Ovary (tissue), 10 donors: ENCODE measurements at regions of chr22 and their contacts with region 1.

Region 1: DNA sequence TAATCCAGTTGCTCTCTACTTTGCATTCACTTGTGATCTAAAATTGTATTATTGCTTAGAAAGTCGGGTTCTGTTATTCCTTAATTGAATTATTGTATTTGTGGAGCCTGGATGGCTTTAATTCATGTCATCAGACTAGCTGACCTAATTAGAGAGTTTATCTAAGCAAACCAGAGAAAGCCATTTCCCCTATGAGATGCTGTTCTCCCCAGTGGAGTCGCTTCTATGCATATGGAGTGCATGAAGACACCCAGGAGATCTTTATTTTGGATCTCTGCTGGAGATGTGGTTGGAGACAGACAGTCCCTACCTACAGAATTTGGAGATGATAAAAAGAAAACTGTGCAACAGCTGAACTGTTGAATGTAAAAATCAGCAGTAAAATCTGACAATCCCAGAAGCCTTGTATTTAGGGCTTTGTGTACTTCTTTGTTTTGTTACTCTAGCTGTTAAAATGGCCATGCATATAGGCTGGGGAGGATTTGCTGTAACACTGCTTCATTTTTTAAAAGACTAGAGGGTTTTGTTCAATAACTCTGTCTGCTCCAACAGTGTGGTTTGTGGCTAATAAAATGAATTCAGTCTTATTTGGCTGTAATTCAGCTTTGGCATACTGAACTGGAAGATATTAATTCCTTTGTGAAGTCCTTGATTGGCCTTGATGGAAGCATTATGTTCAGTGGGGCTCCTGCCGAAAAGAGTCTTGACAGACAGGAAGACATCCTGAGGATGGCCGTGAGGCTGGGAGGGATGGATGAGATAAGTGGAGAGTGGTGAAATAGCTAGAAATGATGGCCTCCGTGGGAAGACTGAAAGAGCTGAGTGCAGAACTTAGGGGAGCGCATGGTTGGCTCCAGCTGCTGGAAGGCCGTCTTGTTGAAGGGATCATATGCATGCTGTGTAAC is 45.0 kb upstream of the MYO18B start:
- DNase-seq: no peak
- H3K4me3 ChIP-seq: no peak overlapping the region
- H3K27ac ChIP-seq: no peak overlapping the region
- H3K4me1 ChIP-seq: no peaks in the 10 kb centered on the region
- H3K27me3 ChIP-seq: no peaks in the 10 kb centered on the region
- CTCF ChIP-seq: no peak
- EP300 ChIP-seq: no peak
- POLR2A ChIP-seq: no peak

Region 2: GRCh38 chr22:25554238-25554671 is 142.8 kb before region 1 on chr22:
- intact Hi-C with region 1: loop called in 1 of 4 experiments (anchors 10 kb)
- DNase-seq: no peak
- H3K4me3 ChIP-seq: no peak overlapping the region
- H3K27ac ChIP-seq: no peak overlapping the region
- H3K4me1 ChIP-seq: no peaks in the 10 kb centered on the region
- H3K27me3 ChIP-seq: no peaks in the 10 kb centered on the region
- CTCF ChIP-seq: no peak
- EP300 ChIP-seq: no peak
- POLR2A ChIP-seq: no peak

Region 3: DNA sequence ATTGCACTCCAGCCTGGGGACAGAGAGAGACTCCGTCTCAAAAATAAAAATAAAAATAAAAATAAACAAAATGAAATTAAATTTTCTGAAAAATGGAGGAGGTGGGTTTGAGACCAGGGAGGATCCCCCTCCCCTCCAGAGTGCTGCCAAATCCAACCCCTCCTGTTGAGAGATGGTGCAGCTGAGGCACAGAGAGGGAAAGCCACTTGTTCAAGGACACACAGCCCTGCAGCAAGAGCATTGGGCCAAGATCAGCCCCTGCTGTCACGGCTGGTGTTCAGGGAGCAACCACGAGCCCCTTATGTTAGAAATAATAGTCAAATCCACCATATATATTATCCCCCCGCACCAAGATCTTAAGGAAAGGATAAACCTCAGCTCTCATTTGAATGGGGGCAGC is 47.7 kb after region 1 on chr22:
- intact Hi-C with region 1: loop called in 1 of 4 experiments (anchors 1 kb)
- DNase-seq: no peak
- H3K4me3 ChIP-seq: no peak overlapping the region
- H3K27ac ChIP-seq: no peak overlapping the region
- H3K4me1 ChIP-seq: no peaks in the 10 kb centered on the region
- H3K27me3 ChIP-seq: no peaks in the 10 kb centered on the region
- CTCF ChIP-seq: no peak
- EP300 ChIP-seq: no peak
- POLR2A ChIP-seq: no peak